Gastrocnemius medialis (tissue), 4 donors: ENCODE measurements at regions of chr12 and their contacts with region 1.

Region 1: DNA sequence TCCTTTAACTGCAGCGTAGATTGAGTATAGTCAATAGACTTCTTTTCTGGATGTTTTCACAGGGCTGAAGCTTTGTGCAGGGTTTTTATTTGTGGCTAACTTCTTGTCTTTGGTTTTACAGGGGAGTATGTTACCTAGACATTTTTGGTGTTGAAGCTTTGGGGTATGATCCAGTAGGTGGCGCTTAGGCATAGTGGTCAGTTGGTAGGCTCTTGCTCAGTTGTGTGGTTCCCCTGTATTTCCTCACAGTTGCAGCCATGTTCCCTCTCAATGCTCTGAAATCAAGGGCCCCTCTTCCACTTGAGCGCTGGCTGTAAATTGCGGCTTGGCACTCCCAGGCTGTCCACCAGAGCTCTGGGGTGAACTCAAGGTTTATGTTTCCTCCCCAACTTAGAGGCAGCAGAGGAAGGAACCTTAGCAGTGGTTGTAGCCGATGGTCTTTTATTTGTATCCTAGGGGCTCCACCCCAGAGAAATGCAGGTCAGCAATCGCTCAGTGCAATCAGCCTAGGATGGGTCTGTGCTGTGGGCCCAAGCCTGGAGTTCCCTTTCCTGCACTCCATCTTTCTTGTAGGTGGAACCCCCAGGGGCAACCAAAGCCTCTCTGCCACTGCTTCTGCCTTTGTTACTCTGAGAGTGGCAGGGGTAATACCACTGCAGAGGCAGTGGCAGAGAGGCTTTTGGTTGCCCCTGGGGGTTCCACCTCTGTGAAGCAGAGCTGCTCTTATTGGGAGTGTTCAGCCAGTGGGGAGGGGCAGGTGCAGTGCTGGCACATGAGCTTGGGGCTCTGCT is 55.1 kb downstream of the CMAS start:
- DNase-seq: no peak
- ATAC-seq: peak in 1 of 2 donors; percentile 51
- H3K4me3 ChIP-seq: no peak overlapping the region
- H3K27ac ChIP-seq: no peak overlapping the region
- H3K4me1 ChIP-seq: no peaks in the 10 kb centered on the region
- H3K27me3 ChIP-seq: no peaks in the 10 kb centered on the region
- CTCF ChIP-seq: peak in 3 of 5 experiments; percentile 13 to 36 (median 18)
- POLR2A ChIP-seq: no peak

Region 2: GRCh38 chr12:22029991-22030390 is 71.2 kb before region 1 on chr12:
- in situ Hi-C with region 1: no loop called
- intact Hi-C with region 1: no loop called
- DNase-seq: no peak
- ATAC-seq: no peak
- H3K4me3 ChIP-seq: no peak overlapping the region
- H3K27ac ChIP-seq: no peak overlapping the region
- H3K4me1 ChIP-seq: no peaks in the 10 kb centered on the region
- H3K27me3 ChIP-seq: no peaks in the 10 kb centered on the region
- CTCF ChIP-seq: no peak
- POLR2A ChIP-seq: no peak

Region 3: DNA sequence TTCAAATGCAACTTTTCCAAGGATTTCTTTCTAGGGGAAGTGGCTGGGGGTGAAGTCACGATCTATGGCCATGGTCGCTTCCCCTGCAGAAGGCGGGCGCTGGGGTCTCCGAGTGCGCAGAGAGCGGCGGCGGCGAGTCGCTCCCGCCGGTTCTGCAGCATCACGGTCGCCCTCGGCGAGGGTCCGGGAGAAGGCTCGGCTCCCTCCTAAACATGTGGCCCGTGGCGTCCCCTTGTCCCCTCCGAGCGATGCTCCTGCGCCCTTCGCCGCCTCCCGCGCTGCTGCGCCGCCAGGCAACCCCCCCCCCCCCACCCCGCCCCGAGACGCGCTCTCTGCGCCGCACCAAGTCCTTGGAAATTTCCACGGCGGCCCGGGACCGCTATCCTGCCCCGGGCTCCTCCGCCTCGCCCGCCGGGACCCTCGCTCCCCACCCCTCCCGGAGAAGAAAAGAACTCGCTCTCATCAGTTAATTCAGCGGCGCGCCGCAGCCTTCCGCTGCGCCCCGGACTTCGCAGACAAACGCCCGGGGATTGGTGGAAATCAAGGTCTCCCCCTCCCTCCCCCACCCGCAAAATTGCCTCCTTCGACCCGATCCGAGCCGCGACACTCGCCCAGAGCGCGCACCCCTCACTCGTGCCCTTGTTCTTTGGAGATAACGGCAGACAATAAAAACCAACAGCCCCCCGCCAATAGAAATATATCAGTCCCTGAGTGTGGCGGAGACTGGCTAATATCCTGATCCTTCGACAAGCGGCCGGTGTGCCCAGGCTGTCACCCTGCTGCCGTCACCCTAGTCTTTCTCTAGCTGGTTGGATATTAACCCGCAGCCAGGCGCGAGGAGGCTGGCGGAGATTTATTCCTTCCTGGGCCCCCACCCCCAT is 233.5 kb after region 1 on chr12 and contains the start of gene ST8SIA1:
- in situ Hi-C with region 1: loop called (anchors 10 to 25 kb)
- intact Hi-C with region 1: no loop called
- DNase-seq: peak in 1 of 2 donors; percentile 17
- ATAC-seq: peak; percentile 25 to 40
- H3K4me3 ChIP-seq: peak within 1 kb of the TSS; percentile 57 to 66 (median 63)
- H3K27ac ChIP-seq: peak within 1 kb of the TSS in 3 of 4 donors; percentile 2 to 46 (median 18)
- H3K4me1 ChIP-seq: peaks cover 0 to 10% of the 10 kb centered on the region in 2 donors
- H3K27me3 ChIP-seq: peaks cover 16 to 33% (median 32%) of the 10 kb centered on the region in 3 donors
- CTCF ChIP-seq: no peak
- POLR2A ChIP-seq: no peak
- total RNA-seq, gene ST8SIA1: 0.17 to 2.5 (median 0.67) TPM

Region 4: DNA sequence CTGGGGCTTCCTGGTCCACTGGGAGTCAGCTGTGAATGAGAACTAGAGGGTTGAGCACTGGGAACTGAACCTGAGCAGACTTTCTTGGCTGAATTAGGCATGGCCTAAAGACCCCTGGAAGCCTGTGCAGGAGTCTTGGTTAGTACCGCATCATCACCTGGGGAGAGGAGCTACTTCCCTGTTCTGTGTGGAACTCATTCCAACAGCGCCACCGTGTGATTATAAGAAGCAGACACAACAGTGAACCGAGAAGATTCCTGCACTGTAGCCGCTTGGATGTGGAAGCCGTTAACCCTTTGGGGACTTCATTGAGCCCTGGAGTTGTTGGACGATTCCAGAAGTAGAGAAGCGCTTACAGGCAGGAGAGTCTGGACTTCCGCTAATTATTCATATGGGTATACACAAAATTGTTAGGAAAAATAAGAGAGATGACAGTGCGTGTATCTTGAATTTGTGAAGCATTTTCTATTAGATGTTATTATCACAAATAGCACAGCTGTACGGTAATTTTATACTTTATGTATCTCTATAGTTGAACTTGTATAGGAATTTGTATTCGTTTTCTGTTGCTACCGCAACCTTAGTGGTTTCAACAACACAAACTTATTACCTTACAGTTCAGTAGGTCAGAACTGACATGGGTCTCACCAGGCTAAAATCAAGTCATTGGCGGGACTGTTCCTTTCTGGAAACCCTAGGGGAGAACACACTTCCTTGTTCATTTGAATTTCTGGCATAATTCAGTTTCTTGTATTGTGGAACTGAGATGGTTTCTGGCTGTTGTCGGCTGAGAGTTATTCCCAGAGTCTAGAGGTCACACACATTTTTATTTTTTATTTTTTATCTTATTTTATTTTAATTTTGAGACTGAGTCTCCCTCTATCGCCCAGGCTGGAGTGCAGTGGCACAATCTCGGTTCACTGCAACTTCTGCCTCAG is 342.5 kb after region 1 on chr12:
- in situ Hi-C with region 1: loop called in 3 of 4 experiments (anchors 10 to 25 kb)
- intact Hi-C with region 1: no loop called
- DNase-seq: peak; percentile 29 to 38
- ATAC-seq: peak; percentile 83 to 93
- H3K4me3 ChIP-seq: no peak overlapping the region
- H3K27ac ChIP-seq: no peak overlapping the region
- H3K4me1 ChIP-seq: no peaks in the 10 kb centered on the region
- H3K27me3 ChIP-seq: no peaks in the 10 kb centered on the region
- CTCF ChIP-seq: peak; percentile 17 to 68 (median 63)
- POLR2A ChIP-seq: no peak